ENCODE measurements at regions of chr20 and their contacts with region 1.

Region 1: GRCh38 chr20:8156235-8157079 is 24.4 kb downstream of the PLCB1 start:
- DNase-seq: peak; percentile 59
- ATAC-seq: peak; percentile 51
- H3K4me3 ChIP-seq: no peak overlapping the region
- H3K27ac ChIP-seq: no peak overlapping the region
- H3K4me1 ChIP-seq: peaks cover 9% of the 10 kb centered on the region
- H3K27me3 ChIP-seq: no peaks in the 10 kb centered on the region
- CTCF ChIP-seq: no peak
- POLR2A ChIP-seq: no peak
- RAD21 ChIP-seq: no peak

Region 2: DNA sequence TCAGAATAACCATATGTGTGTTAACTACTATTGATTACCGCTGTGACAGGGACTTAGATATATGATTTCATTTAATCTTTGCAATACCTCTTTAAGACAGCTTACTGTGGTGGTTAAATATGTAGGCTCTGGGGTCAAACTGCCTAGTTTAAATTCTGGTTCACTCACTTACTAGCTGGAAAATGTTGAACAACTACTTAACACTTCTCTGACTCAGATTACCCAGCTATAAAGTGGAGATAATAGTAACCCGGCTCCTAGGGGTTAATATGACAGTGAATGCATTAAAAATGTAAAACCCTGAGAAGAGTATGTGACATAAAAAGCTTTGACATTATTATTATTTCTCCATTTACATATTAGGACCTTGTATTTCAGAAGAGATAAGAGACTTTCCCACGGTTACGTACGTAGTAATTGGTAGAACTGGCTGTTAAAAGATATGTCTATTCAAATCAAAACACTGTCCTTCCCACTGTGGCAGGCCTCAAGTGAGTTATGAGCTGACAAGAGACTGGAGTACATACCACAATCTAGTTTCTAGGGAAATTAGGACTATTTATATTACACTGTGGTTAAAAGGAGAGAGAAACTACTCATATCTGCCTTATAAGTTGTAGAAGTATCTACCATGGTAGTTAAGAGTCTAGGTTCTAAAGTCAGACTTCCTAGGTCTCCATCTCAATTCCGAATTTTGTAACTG is 28.8 kb before region 1 on chr20:
- CTCF ChIA-PET with region 1: no interaction called
- POLR2A ChIA-PET with region 1: no interaction called
- dilution Hi-C with region 1: no loop called
- in situ Hi-C with region 1: no loop called
- intact Hi-C with region 1: no loop called
- DNase-seq: peak; percentile 42
- ATAC-seq: no peak
- H3K4me3 ChIP-seq: no peak overlapping the region
- H3K27ac ChIP-seq: no peak overlapping the region
- H3K4me1 ChIP-seq: peaks cover 7% of the 10 kb centered on the region
- H3K27me3 ChIP-seq: no peaks in the 10 kb centered on the region
- CTCF ChIP-seq: no peak
- POLR2A ChIP-seq: no peak
- RAD21 ChIP-seq: no peak

Region 3: DNA sequence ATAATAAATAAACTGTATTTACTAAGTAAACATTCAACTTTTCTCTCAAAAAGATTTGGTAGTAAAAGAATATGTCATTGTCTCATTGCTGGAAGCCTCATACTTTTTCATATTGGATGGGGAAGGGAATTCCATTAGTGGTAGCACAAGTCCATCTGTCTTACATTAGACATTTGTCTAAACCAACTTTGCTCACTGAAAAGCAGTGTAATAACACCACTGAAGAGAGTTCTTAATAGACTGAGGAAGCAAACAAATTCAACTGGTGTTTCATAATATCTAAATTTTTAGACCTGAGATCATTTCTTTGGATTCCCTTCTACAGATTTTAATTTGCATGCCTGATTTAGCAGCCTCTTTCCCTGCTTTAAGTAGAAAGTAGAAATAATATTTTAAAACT is 38.3 kb after region 1 on chr20:
- CTCF ChIA-PET with region 1: no interaction called
- POLR2A ChIA-PET with region 1: no interaction called
- dilution Hi-C with region 1: no loop called
- in situ Hi-C with region 1: no loop called
- intact Hi-C with region 1: loop called (anchors 5 kb)
- DNase-seq: peak; percentile 19
- ATAC-seq: peak; percentile 56; the same call in 1 of the 2 replicates
- H3K4me3 ChIP-seq: no peak overlapping the region
- H3K27ac ChIP-seq: no peak overlapping the region
- H3K4me1 ChIP-seq: no peaks in the 10 kb centered on the region; the same call in 1 of the 2 replicates
- H3K27me3 ChIP-seq: no peaks in the 10 kb centered on the region
- CTCF ChIP-seq: no peak
- POLR2A ChIP-seq: no peak
- RAD21 ChIP-seq: no peak

Region 4: DNA sequence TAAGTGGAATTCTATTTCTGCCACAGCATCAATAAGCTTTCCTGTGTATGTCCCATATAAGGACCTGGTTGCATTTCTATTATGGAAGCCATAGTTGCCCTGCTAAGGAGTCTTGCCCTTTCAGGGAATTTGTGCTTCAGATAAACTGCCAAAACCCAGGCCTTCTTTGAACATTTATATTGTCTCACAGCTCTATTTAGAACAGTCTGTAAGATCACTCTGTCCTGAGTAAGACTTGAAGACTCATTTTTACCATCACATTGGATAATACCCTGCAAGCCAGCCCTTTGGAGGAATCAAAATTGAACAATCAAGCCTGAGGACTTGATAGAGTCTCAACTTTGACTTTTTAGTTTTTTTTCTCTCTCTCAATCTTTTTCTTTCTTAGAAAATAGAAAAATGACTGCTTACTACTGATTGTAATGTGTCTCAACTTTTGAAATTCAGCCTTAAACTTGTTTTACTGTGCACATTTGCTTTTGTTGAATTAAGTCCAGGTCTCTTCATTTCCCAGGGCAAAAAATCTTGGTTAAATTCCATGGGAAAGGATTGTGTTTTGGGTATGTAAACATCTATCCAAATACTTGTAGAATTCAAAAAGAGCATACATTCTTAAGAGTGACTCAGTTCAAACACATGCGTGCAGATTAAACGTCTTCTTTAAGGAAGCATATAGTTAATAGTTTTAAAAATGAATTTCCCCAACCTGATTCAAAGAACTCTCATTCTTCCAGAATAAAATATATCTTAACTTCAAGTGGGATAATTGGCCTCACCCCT is 66.8 kb after region 1 on chr20:
- CTCF ChIA-PET with region 1: no interaction called
- POLR2A ChIA-PET with region 1: no interaction called
- dilution Hi-C with region 1: no loop called
- in situ Hi-C with region 1: no loop called
- intact Hi-C with region 1: no loop called
- DNase-seq: peak; percentile 94
- ATAC-seq: peak; percentile 86
- H3K4me3 ChIP-seq: no peak overlapping the region
- H3K27ac ChIP-seq: peak overlapping the region; percentile 59
- H3K4me1 ChIP-seq: peaks cover 8% of the 10 kb centered on the region
- H3K27me3 ChIP-seq: no peaks in the 10 kb centered on the region
- CTCF ChIP-seq: no peak
- POLR2A ChIP-seq: no peak
- RAD21 ChIP-seq: no peak

Measured in IMR-90 (cell line).